HEK293 (cell line): ENCODE measurements at regions of chr7 and their contacts with region 1.

Region 1: GRCh38 chr7:148698397-148699023 is at the start of gene CUL1:
- H3K4me3 ChIP-seq: peak within 1 kb of the TSS; percentile 79
- H3K27ac ChIP-seq: peak within 1 kb of the TSS; percentile 93
- H3K4me1 ChIP-seq: peaks cover 9% of the 10 kb centered on the region; the same call in 1 of the 2 replicates
- CTCF ChIP-seq: no peak

Region 2: GRCh38 chr7:148773334-148773733 is 74.8 kb after region 1 on chr7:
- CTCF ChIA-PET with region 1: no interaction called
- POLR2A ChIA-PET with region 1: interaction called, 10 read pairs
- H3K4me3 ChIP-seq: no peak overlapping the region
- H3K27ac ChIP-seq: no peak overlapping the region
- H3K4me1 ChIP-seq: peaks cover 3% of the 10 kb centered on the region
- CTCF ChIP-seq: no peak